Heart right ventricle (tissue), 16 donors: ENCODE measurements at regions of chr13 and their contacts with region 1.

Region 1: GRCh38 chr13:85799097-85799582 is at the start of gene SLITRK6:
- DNase-seq: no peak
- ATAC-seq: no peak
- H3K4me3 ChIP-seq: peak within 1 kb of the TSS in 1 of 10 donors; percentile 20
- H3K27ac ChIP-seq: no peak within 1 kb of the TSS
- H3K4me1 ChIP-seq: no peaks in the 10 kb centered on the region
- H3K27me3 ChIP-seq: no peaks in the 10 kb centered on the region
- CTCF ChIP-seq: no peak
- total RNA-seq, gene SLITRK6: 0.18 to 1.2 (median 0.64) TPM in 9 of 10 donors, not detected in the other

Region 2: DNA sequence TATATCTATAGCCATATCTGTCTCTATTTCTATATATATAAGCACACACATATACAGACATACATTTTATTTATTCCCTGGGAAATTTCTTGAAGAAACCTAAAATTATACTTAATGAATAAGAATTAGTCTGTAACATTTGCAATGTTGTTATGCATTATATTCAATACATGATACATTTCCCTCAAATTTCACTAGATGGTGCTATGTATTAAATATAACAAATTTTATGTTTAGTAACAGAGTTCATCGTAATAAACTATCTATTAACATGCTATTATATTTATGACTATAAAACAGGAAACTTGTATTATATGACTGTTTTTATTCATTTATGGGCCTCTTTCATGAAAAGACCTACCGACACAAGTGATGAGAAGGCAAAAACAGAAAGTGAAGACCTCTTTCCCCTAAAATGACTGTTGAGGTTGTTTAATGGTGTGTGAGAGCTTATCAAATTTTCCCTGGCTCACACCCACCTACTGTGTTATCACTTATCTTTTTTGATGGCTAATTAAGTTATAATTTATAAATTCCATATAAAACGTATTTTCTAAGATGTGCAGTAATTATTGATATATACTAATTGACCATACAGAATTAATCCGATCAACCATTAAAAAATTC is 881.8 kb before region 1 on chr13:
- intact Hi-C with region 1: loop called in 3 of 10 experiments (anchors 10 kb)
- DNase-seq: no peak
- ATAC-seq: no peak
- H3K4me3 ChIP-seq: no peak overlapping the region
- H3K27ac ChIP-seq: no peak overlapping the region
- H3K4me1 ChIP-seq: no peaks in the 10 kb centered on the region
- H3K27me3 ChIP-seq: no peaks in the 10 kb centered on the region
- CTCF ChIP-seq: peak in 7 of 9 donors; percentile 21 to 55 (median 39)